Naive thymus-derived CD4-positive, alpha-beta T cell (primary cell): ENCODE measurements at regions of chr17 and their contacts with region 1.

Region 1: DNA sequence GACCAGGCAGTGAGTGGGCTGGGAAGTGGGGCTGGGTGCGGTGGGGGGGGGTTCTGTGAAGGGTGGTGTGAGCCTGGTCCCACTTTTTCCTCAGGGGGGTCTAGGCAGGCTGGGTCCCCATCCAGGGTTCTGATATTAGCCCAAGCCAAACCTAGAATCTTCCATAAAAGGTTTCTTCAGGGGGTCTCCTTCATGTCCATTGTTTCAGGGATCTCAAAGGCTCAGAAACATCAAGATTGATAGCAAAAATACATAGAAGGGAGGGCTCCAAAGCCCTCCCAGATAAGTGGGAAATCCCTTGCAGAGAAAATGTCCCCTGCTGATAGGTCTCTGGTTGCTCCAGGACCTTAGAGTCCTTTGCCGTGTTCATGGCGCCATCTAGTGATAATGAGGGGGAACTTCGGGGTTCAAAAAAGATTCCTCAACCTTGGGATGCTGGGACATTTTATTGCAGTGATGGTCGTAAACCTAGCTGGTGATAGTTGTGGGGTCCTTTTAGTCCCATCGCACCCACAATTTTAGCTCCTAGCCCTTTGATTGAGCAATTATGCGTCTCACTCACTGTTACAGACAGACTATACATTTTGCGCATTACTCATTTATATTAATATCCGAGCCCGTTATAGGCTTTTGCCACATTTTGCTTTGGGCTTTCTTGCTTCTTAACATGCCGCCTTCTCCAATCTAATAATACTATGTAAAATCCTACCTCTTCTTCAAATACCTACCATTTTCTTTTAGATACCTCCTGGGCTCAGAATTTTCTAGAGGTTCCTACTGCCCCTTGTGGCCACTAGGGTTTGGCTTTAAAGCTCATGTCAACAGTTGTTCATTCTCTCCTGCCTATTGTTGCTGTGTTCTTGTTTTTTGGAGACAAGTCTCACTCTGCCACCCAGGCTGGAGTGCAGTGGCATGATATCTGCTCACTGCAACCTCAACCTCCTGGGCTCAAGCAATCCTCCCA is 35.1 kb downstream of the IGF2BP1 start:
- DNase-seq: peak in 8 of 9 donors; percentile 7 to 49 (median 41)
- ATAC-seq: peak; percentile 81
- H3K4me3 ChIP-seq: no peak overlapping the region
- H3K4me3 Mint-ChIP-seq: no peak overlapping the region
- H3K27ac ChIP-seq: no peak overlapping the region
- H3K27ac Mint-ChIP-seq: no peak overlapping the region
- H3K4me1 ChIP-seq: no peaks in the 10 kb centered on the region
- H3K4me1 Mint-ChIP-seq: peaks cover 0 to 7% (median 6%) of the 10 kb centered on the region in 7 donors
- H3K27me3 ChIP-seq: no peaks in the 10 kb centered on the region
- H3K27me3 Mint-ChIP-seq: peaks cover 0 to 10% (median 9%) of the 10 kb centered on the region in 5 donors

Region 2: GRCh38 chr17:48671697-48672171 is 360.5 kb before region 1 on chr17:
- CTCF ChIA-PET with region 1: interaction called, 5 read pairs
- POLR2A ChIA-PET with region 1: no interaction called
- intact Hi-C with region 1: loop called in 1 of 2 experiments (anchors 1 kb)
- DNase-seq: peak; percentile 42 to 70 (median 60)
- ATAC-seq: peak; percentile 90
- H3K4me3 ChIP-seq: no peak overlapping the region
- H3K4me3 Mint-ChIP-seq: peak overlapping the region in 8 of 10 donors; percentile 16 to 62 (median 54)
- H3K27ac ChIP-seq: no peak overlapping the region
- H3K27ac Mint-ChIP-seq: no peak overlapping the region
- H3K4me1 ChIP-seq: no peaks in the 10 kb centered on the region
- H3K4me1 Mint-ChIP-seq: peaks cover 0 to 7% (median 5%) of the 10 kb centered on the region in 7 donors
- H3K27me3 ChIP-seq: no peaks in the 10 kb centered on the region
- H3K27me3 Mint-ChIP-seq: peaks cover 28 to 54% (median 42%) of the 10 kb centered on the region in 5 donors

Region 3: DNA sequence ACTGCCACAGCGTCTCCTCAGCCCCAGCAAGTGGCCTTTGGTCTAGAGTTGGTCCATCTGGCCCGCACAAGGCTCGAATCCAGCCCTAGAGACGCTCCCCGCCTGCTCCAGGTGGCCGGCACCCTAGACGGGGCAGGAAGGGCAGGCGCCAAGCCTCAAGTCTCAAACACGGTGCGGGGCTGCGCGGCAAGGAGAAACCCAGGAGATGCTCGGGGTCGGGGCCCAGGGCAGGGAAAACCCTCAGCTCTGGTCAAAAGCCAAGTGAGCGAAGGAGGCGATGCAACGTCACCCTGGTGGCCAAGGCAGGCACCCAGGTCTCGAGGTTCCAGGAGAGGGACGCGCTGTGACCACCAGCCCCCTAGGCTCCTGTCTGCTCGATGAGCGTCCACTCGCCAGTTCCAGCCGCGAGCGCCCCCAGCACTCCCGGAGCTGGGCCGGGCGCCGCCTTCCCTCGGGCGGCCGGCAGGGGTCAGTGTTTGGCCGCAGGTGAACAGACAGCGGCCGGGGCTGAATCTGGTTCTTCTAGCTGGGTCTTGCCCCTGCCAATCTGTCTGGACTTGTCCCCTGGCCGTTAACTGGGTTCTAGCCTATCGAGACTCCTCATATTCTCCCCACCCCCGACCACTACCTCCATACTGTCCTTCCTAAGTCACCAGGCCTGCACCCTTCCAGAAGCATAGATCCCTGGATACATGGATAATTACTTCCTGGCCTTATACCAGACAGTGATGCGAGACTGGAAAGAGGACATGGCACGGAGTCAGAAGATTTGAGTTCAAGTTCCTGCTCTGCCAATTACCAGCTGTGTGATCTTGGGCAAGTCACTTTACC is 353.9 kb before region 1 on chr17:
- CTCF ChIA-PET with region 1: interaction called, 5 read pairs
- POLR2A ChIA-PET with region 1: no interaction called
- intact Hi-C with region 1: loop called (anchors 1 kb)
- DNase-seq: peak; percentile 43 to 80 (median 61)
- ATAC-seq: peak; percentile 95
- H3K4me3 ChIP-seq: no peak overlapping the region
- H3K4me3 Mint-ChIP-seq: peak overlapping the region in 4 of 10 donors; percentile 33 to 67 (median 43)
- H3K27ac ChIP-seq: no peak overlapping the region
- H3K27ac Mint-ChIP-seq: peak overlapping the region in 1 of 9 donors; percentile 43
- H3K4me1 ChIP-seq: no peaks in the 10 kb centered on the region
- H3K4me1 Mint-ChIP-seq: peaks cover 0 to 6% (median 0%) of the 10 kb centered on the region in 7 donors
- H3K27me3 ChIP-seq: no peaks in the 10 kb centered on the region
- H3K27me3 Mint-ChIP-seq: peaks cover 26 to 72% (median 47%) of the 10 kb centered on the region in 5 donors

Region 4: DNA sequence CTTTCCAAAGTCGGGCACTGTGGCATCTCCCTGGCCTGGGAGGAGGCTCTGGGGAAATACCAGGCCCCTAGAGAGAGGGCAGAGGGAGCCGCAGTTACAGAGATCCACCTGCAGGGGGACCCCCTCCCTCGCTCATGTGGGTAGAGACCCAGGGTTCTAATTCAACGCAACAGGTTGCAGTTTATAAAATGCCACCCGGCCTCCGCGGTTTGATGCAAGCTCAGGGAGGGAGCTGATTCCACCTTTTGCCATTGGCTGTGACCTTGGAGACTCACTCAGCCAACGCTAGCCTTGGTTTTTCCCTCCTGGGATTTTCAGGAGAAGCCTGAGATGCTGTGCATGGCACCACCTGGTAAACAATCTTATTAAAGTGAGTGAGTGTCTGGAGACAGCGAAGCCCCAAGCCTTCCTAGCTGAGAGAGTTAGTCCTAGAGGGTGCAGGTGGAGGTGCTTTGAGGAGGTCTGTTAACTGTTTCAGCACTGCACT is 227.3 kb before region 1 on chr17:
- CTCF ChIA-PET with region 1: interaction called, 4 read pairs
- POLR2A ChIA-PET with region 1: no interaction called
- intact Hi-C with region 1: loop called (anchors 1 to 2 kb)
- DNase-seq: peak; percentile 34 to 74 (median 61)
- ATAC-seq: peak; percentile 94
- H3K4me3 ChIP-seq: no peak overlapping the region
- H3K4me3 Mint-ChIP-seq: no peak overlapping the region
- H3K27ac ChIP-seq: no peak overlapping the region
- H3K27ac Mint-ChIP-seq: peak overlapping the region in 1 of 9 donors; percentile 16
- H3K4me1 ChIP-seq: no peaks in the 10 kb centered on the region
- H3K4me1 Mint-ChIP-seq: peaks cover 0 to 4% (median 0%) of the 10 kb centered on the region in 7 donors
- H3K27me3 ChIP-seq: peaks cover 0 to 3% of the 10 kb centered on the region in 2 donors
- H3K27me3 Mint-ChIP-seq: peaks cover 3 to 36% (median 13%) of the 10 kb centered on the region in 5 donors

Region 5: GRCh38 chr17:48816774-48817590 is 215.3 kb before region 1 on chr17 and contains the start of gene TTLL6:
- CTCF ChIA-PET with region 1: no interaction called
- POLR2A ChIA-PET with region 1: no interaction called
- intact Hi-C with region 1: loop called in 1 of 2 experiments (anchors 2 kb)
- DNase-seq: peak; percentile 54 to 90 (median 80)
- ATAC-seq: peak; percentile 98
- H3K4me3 ChIP-seq: peak within 1 kb of the TSS; percentile 60
- H3K4me3 Mint-ChIP-seq: peak within 1 kb of the TSS; percentile 77 to 89 (median 85)
- H3K27ac ChIP-seq: no peak within 1 kb of the TSS
- H3K27ac Mint-ChIP-seq: peak within 1 kb of the TSS in 3 of 9 donors; percentile 3 to 74 (median 14)
- H3K4me1 ChIP-seq: peaks cover 0 to 13% of the 10 kb centered on the region in 2 donors
- H3K4me1 Mint-ChIP-seq: peaks cover 9 to 24% (median 15%) of the 10 kb centered on the region in 7 donors
- H3K27me3 ChIP-seq: no peaks in the 10 kb centered on the region
- H3K27me3 Mint-ChIP-seq: peaks cover 0 to 79% (median 17%) of the 10 kb centered on the region in 5 donors
- total RNA-seq, gene TTLL6: not detected

Region 6: GRCh38 chr17:48970224-48970623 is 62.0 kb before region 1 on chr17:
- CTCF ChIA-PET with region 1: no interaction called
- POLR2A ChIA-PET with region 1: no interaction called
- intact Hi-C with region 1: no loop called
- DNase-seq: no peak
- ATAC-seq: no peak
- H3K4me3 ChIP-seq: no peak overlapping the region
- H3K4me3 Mint-ChIP-seq: no peak overlapping the region
- H3K27ac ChIP-seq: no peak overlapping the region
- H3K27ac Mint-ChIP-seq: no peak overlapping the region
- H3K4me1 ChIP-seq: no peaks in the 10 kb centered on the region
- H3K4me1 Mint-ChIP-seq: no peaks in the 10 kb centered on the region
- H3K27me3 ChIP-seq: no peaks in the 10 kb centered on the region
- H3K27me3 Mint-ChIP-seq: peaks cover 37 to 61% (median 46%) of the 10 kb centered on the region in 5 donors